CD4-positive, alpha-beta memory T cell (primary cell): ENCODE measurements at regions of chrX and their contacts with region 1.

Region 1: DNA sequence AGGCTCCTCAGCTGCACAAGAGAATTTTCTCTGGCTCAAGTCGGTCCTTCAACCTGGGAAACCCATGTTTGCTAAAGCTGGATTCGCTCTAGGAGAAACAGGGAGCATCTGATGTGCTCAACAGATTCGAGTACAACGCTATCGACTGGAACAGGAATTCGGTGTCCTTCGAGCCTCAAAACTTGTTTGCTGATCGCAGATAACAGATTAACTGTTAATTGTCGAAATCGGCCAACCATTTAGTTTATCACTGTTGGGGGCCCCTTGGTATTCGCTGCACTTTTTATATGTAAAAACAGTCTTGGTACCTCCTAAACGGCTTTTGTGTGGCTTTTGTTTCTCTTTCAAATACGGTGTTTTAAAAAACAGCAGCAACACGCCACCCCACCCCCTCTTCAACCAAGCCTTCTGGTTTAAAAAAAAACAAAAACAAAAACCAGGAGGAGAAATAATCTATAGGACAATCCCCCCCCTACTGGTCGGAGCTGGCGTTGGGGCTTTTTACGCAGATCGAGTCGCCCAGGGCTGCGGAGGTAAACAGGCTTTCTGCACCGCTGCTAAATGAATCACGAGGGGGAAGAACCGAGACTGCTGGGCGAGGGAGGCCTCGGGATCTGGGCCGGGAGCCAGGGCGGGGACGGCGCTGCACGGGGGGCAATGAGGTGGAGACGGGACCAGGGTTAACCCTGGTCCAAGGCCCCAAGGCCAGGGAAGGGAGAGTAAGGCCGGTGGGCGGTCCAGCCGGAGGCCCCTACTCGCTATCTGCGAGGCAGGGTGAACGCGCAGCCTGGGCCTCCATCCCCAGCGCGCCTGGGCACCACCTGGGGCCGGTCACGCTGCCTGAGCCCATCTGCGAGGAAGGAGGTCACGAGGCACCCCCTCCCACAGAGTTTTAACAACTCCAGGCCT is 71.7 kb upstream of the BCOR start:
- DNase-seq: peak; percentile 74 to 87 (median 80)
- H3K4me3 ChIP-seq: peak overlapping the region in 1 of 2 donors; percentile 49
- H3K4me3 Mint-ChIP-seq: peak overlapping the region; percentile 76 to 94 (median 86)
- H3K27ac ChIP-seq: peak overlapping the region; percentile 84
- H3K27ac Mint-ChIP-seq: peak overlapping the region; percentile 93 to 99 (median 98)
- H3K4me1 ChIP-seq: peaks cover 50% of the 10 kb centered on the region
- H3K4me1 Mint-ChIP-seq: peaks cover 18 to 64% (median 41%) of the 10 kb centered on the region in 4 donors
- H3K27me3 ChIP-seq: no peaks in the 10 kb centered on the region
- H3K27me3 Mint-ChIP-seq: no peaks in the 10 kb centered on the region

Region 2: GRCh38 chrX:39582091-39582490 is 587.4 kb before region 1 on chrX:
- CTCF ChIA-PET with region 1: no interaction called
- POLR2A ChIA-PET with region 1: no interaction called
- intact Hi-C with region 1: no loop called
- DNase-seq: no peak
- H3K4me3 ChIP-seq: no peak overlapping the region
- H3K4me3 Mint-ChIP-seq: no peak overlapping the region
- H3K27ac ChIP-seq: no peak overlapping the region
- H3K27ac Mint-ChIP-seq: no peak overlapping the region
- H3K4me1 ChIP-seq: peaks cover 11% of the 10 kb centered on the region
- H3K4me1 Mint-ChIP-seq: peaks cover 3 to 15% (median 5%) of the 10 kb centered on the region in 4 donors
- H3K27me3 ChIP-seq: no peaks in the 10 kb centered on the region
- H3K27me3 Mint-ChIP-seq: peaks cover 0 to 2% of the 10 kb centered on the region in 2 donors

Region 3: DNA sequence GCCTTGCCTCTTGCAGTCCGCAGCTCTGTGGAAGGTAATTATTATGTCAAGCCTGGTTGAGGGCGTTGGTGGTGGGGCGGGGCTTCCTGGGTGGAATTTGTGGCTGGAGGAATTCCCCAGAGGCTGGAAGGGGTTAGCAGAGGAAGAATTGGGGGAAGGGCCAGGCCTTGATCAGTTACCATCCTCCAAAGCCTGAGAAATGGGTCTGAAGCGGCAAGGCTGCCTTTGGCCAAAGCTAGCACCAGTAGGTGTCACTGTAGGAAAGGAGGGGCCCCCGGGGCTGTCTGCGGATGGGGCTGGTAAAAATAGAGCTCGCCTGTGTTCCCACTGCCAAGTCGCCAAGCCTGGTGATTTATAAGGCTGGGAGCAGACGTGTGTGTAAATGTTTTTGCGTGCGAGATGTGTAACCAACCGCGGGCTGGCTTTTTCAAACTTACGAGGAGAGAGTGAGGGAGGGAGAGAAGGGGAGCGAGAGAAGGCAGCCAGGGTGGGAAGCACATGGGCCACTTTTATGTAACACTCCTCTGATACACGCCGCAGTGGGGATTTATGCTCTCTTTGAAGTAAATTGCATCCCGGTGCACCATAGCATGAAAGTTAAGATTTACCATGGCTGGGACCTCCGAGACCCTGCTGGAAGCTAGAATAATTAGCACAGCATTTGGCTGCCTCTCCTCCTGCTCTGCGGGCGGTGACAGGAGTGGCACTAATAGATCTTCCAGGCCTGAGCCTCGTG is 438.6 kb before region 1 on chrX:
- CTCF ChIA-PET with region 1: interaction called, 4 read pairs
- POLR2A ChIA-PET with region 1: no interaction called
- intact Hi-C with region 1: loop called (anchors 5 kb)
- DNase-seq: peak; percentile 35 to 61 (median 44)
- H3K4me3 ChIP-seq: no peak overlapping the region
- H3K4me3 Mint-ChIP-seq: peak overlapping the region in 2 of 8 donors; percentile 46 to 65
- H3K27ac ChIP-seq: no peak overlapping the region
- H3K27ac Mint-ChIP-seq: peak overlapping the region in 3 of 7 donors; percentile 59 to 79 (median 70)
- H3K4me1 ChIP-seq: peaks cover 8% of the 10 kb centered on the region
- H3K4me1 Mint-ChIP-seq: peaks cover 4 to 7% (median 5%) of the 10 kb centered on the region in 4 donors
- H3K27me3 ChIP-seq: no peaks in the 10 kb centered on the region
- H3K27me3 Mint-ChIP-seq: no peaks in the 10 kb centered on the region

Region 4: DNA sequence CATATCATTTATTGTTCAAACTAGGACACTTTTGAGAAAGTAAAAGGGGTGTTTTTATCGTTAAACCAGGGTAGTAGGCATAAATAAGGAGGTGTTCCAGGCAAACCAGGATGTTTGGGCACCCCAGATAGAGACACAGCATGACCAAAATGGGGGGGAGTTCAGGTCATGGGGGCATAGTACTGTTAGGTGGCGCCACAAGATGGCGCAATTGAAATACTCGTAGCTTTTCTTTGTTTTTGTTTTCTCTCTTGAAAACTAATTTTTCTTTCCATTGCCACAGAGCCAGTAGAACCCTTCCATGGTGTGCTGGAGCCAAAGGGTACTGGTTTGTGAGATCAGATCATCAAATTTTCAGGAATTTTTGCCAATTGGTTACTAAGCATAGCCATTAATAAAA is 355.1 kb before region 1 on chrX:
- CTCF ChIA-PET with region 1: interaction called, 3 read pairs
- POLR2A ChIA-PET with region 1: interaction called, 4 read pairs
- intact Hi-C with region 1: loop called (anchors 1 kb)
- DNase-seq: peak; percentile 40 to 47 (median 46)
- H3K4me3 ChIP-seq: no peak overlapping the region
- H3K4me3 Mint-ChIP-seq: peak overlapping the region in 1 of 8 donors; percentile 47
- H3K27ac ChIP-seq: no peak overlapping the region
- H3K27ac Mint-ChIP-seq: peak overlapping the region in 1 of 7 donors; percentile 37
- H3K4me1 ChIP-seq: peaks cover 13% of the 10 kb centered on the region
- H3K4me1 Mint-ChIP-seq: peaks cover 5 to 27% (median 10%) of the 10 kb centered on the region in 4 donors
- H3K27me3 ChIP-seq: no peaks in the 10 kb centered on the region
- H3K27me3 Mint-ChIP-seq: no peaks in the 10 kb centered on the region

Region 5: GRCh38 chrX:40097497-40098263 is 71.8 kb before region 1 on chrX and contains the start of gene BCOR:
- CTCF ChIA-PET with region 1: interaction called, 4 read pairs
- POLR2A ChIA-PET with region 1: interaction called, 323 read pairs
- intact Hi-C with region 1: loop called (anchors 1 kb)
- DNase-seq: peak; percentile 69 to 75 (median 72)
- H3K4me3 ChIP-seq: peak within 1 kb of the TSS in 1 of 2 donors; percentile 58
- H3K4me3 Mint-ChIP-seq: peak within 1 kb of the TSS; percentile 89 to 95 (median 91)
- H3K27ac ChIP-seq: peak within 1 kb of the TSS; percentile 63
- H3K27ac Mint-ChIP-seq: peak within 1 kb of the TSS; percentile 79 to 96 (median 92)
- H3K4me1 ChIP-seq: peaks cover 22% of the 10 kb centered on the region
- H3K4me1 Mint-ChIP-seq: peaks cover 9 to 38% (median 23%) of the 10 kb centered on the region in 4 donors
- H3K27me3 ChIP-seq: no peaks in the 10 kb centered on the region
- H3K27me3 Mint-ChIP-seq: no peaks in the 10 kb centered on the region
- total RNA-seq, gene BCOR: 47.1 to 48.7 TPM

Region 6: GRCh38 chrX:40207626-40208025 is 38.2 kb after region 1 on chrX:
- CTCF ChIA-PET with region 1: no interaction called
- POLR2A ChIA-PET with region 1: interaction called, 3 read pairs
- intact Hi-C with region 1: loop called (anchors 5 kb)
- DNase-seq: no peak
- H3K4me3 ChIP-seq: no peak overlapping the region
- H3K4me3 Mint-ChIP-seq: no peak overlapping the region
- H3K27ac ChIP-seq: no peak overlapping the region
- H3K27ac Mint-ChIP-seq: no peak overlapping the region
- H3K4me1 ChIP-seq: peaks cover 1% of the 10 kb centered on the region
- H3K4me1 Mint-ChIP-seq: peaks cover 1 to 6% (median 4%) of the 10 kb centered on the region in 4 donors
- H3K27me3 ChIP-seq: no peaks in the 10 kb centered on the region
- H3K27me3 Mint-ChIP-seq: no peaks in the 10 kb centered on the region

Region 7: GRCh38 chrX:40735325-40736169 is 566.1 kb after region 1 on chrX and contains the start of gene MED14:
- CTCF ChIA-PET with region 1: no interaction called
- POLR2A ChIA-PET with region 1: no interaction called
- intact Hi-C with region 1: loop called (anchors 10 kb)
- DNase-seq: peak; percentile 95 to 96 (median 96)
- H3K4me3 ChIP-seq: peak within 1 kb of the TSS; percentile 52 to 73
- H3K4me3 Mint-ChIP-seq: peak within 1 kb of the TSS; percentile 93 to 98 (median 97)
- H3K27ac ChIP-seq: peak within 1 kb of the TSS; percentile 94
- H3K27ac Mint-ChIP-seq: peak within 1 kb of the TSS; percentile 97 to 100 (median 99)
- H3K4me1 ChIP-seq: peaks cover 28% of the 10 kb centered on the region
- H3K4me1 Mint-ChIP-seq: peaks cover 23 to 76% (median 43%) of the 10 kb centered on the region in 4 donors
- H3K27me3 ChIP-seq: no peaks in the 10 kb centered on the region
- H3K27me3 Mint-ChIP-seq: no peaks in the 10 kb centered on the region
- total RNA-seq, gene MED14: 37.9 to 39.0 TPM